Naive thymus-derived CD4-positive, alpha-beta T cell (primary cell): ENCODE measurements at regions of chr14 and their contacts with region 1.

Region 1: GRCh38 chr14:35826218-35826951 is at the start of gene BRMS1L:
- DNase-seq: peak; percentile 88 to 97 (median 96)
- ATAC-seq: peak; percentile 99
- H3K4me3 ChIP-seq: peak within 1 kb of the TSS; percentile 95
- H3K4me3 Mint-ChIP-seq: peak within 1 kb of the TSS; percentile 84 to 96 (median 90)
- H3K27ac ChIP-seq: peak within 1 kb of the TSS; percentile 87
- H3K27ac Mint-ChIP-seq: peak within 1 kb of the TSS; percentile 53 to 94 (median 88)
- H3K4me1 ChIP-seq: peaks cover 6 to 8% of the 10 kb centered on the region in 2 donors
- H3K4me1 Mint-ChIP-seq: peaks cover 11 to 31% (median 25%) of the 10 kb centered on the region in 7 donors
- H3K27me3 ChIP-seq: no peaks in the 10 kb centered on the region
- H3K27me3 Mint-ChIP-seq: no peaks in the 10 kb centered on the region
- total RNA-seq, gene BRMS1L: 4.2 to 8.6 (median 5.8) TPM

Region 2: GRCh38 chr14:35533357-35534207 is 292.8 kb before region 1 on chr14 and contains the start of gene INSM2:
- CTCF ChIA-PET with region 1: no interaction called
- POLR2A ChIA-PET with region 1: no interaction called
- intact Hi-C with region 1: loop called in 1 of 2 experiments (anchors 2 kb)
- DNase-seq: peak in 8 of 9 donors; percentile 9 to 76 (median 21)
- ATAC-seq: peak; percentile 65
- H3K4me3 ChIP-seq: peak within 1 kb of the TSS; percentile 49
- H3K4me3 Mint-ChIP-seq: peak within 1 kb of the TSS; percentile 74 to 86 (median 82)
- H3K27ac ChIP-seq: no peak within 1 kb of the TSS
- H3K27ac Mint-ChIP-seq: no peak within 1 kb of the TSS
- H3K4me1 ChIP-seq: peaks cover 0 to 7% of the 10 kb centered on the region in 2 donors
- H3K4me1 Mint-ChIP-seq: peaks cover 0 to 23% (median 13%) of the 10 kb centered on the region in 7 donors
- H3K27me3 ChIP-seq: peaks cover 3 to 11% of the 10 kb centered on the region in 2 donors
- H3K27me3 Mint-ChIP-seq: peaks cover 53 to 81% (median 60%) of the 10 kb centered on the region in 5 donors
- total RNA-seq, gene INSM2: not detected

Region 3: GRCh38 chr14:35814371-35815005 is 11.9 kb before region 1 on chr14:
- CTCF ChIA-PET with region 1: interaction called, 11 read pairs
- POLR2A ChIA-PET with region 1: interaction called, 7 read pairs
- intact Hi-C with region 1: loop called (anchors 1 kb)
- DNase-seq: peak; percentile 54 to 83 (median 71)
- ATAC-seq: peak; percentile 96
- H3K4me3 ChIP-seq: no peak overlapping the region
- H3K4me3 Mint-ChIP-seq: no peak overlapping the region
- H3K27ac ChIP-seq: no peak overlapping the region
- H3K27ac Mint-ChIP-seq: no peak overlapping the region
- H3K4me1 ChIP-seq: no peaks in the 10 kb centered on the region
- H3K4me1 Mint-ChIP-seq: peaks cover 0 to 7% (median 1%) of the 10 kb centered on the region in 7 donors
- H3K27me3 ChIP-seq: no peaks in the 10 kb centered on the region
- H3K27me3 Mint-ChIP-seq: peaks cover 0 to 14% (median 0%) of the 10 kb centered on the region in 5 donors

Region 4: DNA sequence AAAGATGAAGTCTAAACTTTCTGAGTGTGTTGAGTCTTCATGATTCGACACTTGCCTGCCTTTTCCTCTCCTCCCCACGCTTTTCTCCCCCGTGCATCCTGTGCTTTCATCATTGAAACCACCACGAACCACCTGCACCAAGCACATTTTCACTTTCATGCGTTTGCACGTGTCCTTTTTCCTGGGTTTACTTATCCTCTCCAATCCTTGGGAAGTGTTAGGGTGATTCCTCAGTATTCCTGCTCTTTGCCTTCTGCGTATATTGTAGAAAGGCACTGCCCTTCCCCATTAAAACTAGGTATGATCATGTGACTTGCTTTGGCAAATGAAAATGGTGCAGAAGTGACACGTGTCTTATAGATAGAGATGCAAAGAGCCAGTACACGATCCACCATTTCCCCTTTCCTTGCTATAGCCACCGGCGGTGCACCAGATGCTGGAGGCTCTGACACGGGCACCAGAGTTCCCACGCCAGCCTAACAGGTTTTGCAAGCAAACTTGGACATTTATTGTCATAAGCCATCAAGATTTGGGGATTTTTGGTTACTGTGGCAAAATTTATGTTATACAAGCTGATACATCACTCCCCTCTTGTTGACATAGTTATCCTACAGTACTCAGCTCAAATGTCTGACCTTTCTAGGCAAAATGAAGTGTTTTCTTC is 106.4 kb after region 1 on chr14:
- CTCF ChIA-PET with region 1: no interaction called
- POLR2A ChIA-PET with region 1: interaction called, 3 read pairs
- intact Hi-C with region 1: loop called in 1 of 2 experiments (anchors 2 kb)
- DNase-seq: peak in 8 of 9 donors; percentile 22 to 71 (median 66)
- ATAC-seq: peak; percentile 76
- H3K4me3 ChIP-seq: peak overlapping the region; percentile 63
- H3K4me3 Mint-ChIP-seq: peak overlapping the region; percentile 80 to 94 (median 90)
- H3K27ac ChIP-seq: peak overlapping the region; percentile 57
- H3K27ac Mint-ChIP-seq: peak overlapping the region; percentile 77 to 96 (median 90)
- H3K4me1 ChIP-seq: peaks cover 0 to 10% of the 10 kb centered on the region in 2 donors
- H3K4me1 Mint-ChIP-seq: peaks cover 6 to 50% (median 30%) of the 10 kb centered on the region in 7 donors
- H3K27me3 ChIP-seq: no peaks in the 10 kb centered on the region
- H3K27me3 Mint-ChIP-seq: peaks cover 0 to 24% (median 0%) of the 10 kb centered on the region in 5 donors

Region 5: DNA sequence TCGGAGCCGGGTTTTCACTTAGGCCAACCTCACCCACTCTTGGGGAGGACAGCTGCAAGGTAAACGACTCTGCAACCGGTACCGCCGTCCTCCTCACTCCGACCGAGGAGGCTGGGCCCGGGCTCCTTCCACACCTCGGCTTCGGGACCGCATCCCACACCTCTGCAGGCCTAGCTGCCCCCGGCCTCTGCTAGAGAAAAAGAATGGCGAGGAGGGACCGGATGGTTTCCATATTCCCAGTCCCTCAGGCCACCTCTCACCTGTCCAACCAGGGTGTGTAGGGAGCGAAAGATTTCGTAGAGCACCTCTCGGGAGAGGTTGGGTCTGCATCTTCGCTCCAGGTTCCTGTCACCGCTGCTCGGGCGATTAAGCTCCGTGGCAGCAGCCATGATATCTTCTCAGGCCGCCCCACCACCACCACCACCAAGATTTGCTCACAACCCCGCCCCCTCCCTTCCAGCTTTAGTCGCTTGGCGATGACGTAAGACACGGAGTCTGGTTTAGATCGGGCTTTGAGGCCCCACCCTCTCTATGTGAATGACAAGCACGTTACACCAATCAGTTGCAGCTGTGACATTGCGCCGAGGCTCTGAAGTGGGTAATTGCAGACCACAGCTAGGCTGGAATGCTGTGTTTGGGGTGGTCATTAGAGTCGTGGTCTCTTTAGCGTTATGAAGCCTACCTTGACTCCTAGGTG is 494.0 kb after region 1 on chr14 and contains the start of gene MBIP:
- CTCF ChIA-PET with region 1: no interaction called
- POLR2A ChIA-PET with region 1: no interaction called
- intact Hi-C with region 1: loop called (anchors 1 kb)
- DNase-seq: peak; percentile 65 to 96 (median 85)
- ATAC-seq: peak; percentile 99
- H3K4me3 ChIP-seq: peak within 1 kb of the TSS; percentile 97
- H3K4me3 Mint-ChIP-seq: peak within 1 kb of the TSS; percentile 88 to 99 (median 98)
- H3K27ac ChIP-seq: peak within 1 kb of the TSS; percentile 81
- H3K27ac Mint-ChIP-seq: peak within 1 kb of the TSS; percentile 90 to 97 (median 95)
- H3K4me1 ChIP-seq: peaks cover 4 to 12% of the 10 kb centered on the region in 2 donors
- H3K4me1 Mint-ChIP-seq: peaks cover 16 to 52% (median 46%) of the 10 kb centered on the region in 7 donors
- H3K27me3 ChIP-seq: no peaks in the 10 kb centered on the region
- H3K27me3 Mint-ChIP-seq: peaks cover 6 to 25% (median 10%) of the 10 kb centered on the region in 5 donors
- total RNA-seq, gene MBIP: 22.5 to 42.7 (median 24.6) TPM

Region 6: DNA sequence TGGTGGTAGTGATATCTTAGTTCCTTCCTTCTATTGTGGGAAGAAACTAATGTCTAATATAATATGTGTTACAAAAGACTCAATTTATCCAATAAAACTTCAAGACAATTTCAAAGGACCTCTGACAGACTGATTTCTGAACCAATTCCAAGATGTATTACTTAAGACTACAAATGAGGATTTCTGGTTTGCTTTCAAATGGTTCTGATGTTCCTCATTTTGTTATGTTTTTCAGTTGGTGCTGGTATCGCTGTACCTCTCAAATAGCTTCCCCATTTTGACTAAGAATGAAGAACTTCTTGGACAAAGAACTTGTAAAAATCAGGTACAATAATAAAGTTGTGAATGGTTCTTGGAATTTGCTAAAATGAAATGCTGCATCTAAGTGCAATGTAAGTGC is 513.4 kb after region 1 on chr14:
- CTCF ChIA-PET with region 1: no interaction called
- POLR2A ChIA-PET with region 1: no interaction called
- intact Hi-C with region 1: no loop called
- DNase-seq: no peak
- ATAC-seq: no peak
- H3K4me3 ChIP-seq: no peak overlapping the region
- H3K4me3 Mint-ChIP-seq: no peak overlapping the region
- H3K27ac ChIP-seq: no peak overlapping the region
- H3K27ac Mint-ChIP-seq: no peak overlapping the region
- H3K4me1 ChIP-seq: no peaks in the 10 kb centered on the region
- H3K4me1 Mint-ChIP-seq: no peaks in the 10 kb centered on the region
- H3K27me3 ChIP-seq: no peaks in the 10 kb centered on the region
- H3K27me3 Mint-ChIP-seq: peaks cover 7 to 38% (median 18%) of the 10 kb centered on the region in 5 donors